ENCODE measurements at regions of chr1 and their contacts with region 1.

Region 1: DNA sequence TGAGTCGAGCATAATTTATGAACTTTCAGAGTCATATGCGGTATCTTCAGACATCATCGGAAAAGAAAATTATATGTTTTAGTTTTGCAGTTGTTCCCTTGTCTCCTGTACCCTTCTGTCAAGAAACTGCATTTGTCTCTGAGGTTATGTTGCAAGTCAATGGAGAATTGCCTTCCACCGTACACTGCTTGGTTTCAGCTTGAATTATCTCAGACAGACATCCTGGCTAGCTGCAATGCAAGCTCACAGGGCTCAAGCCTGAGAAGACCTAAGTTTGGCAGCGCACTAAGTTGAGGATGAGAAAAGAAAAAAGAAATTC is 156.0 kb downstream of the NFIA start:
- DNase-seq: no peak
- H3K4me3 ChIP-seq: no peak overlapping the region
- H3K27ac ChIP-seq: no peak overlapping the region
- H3K4me1 ChIP-seq: peaks cover 23% of the 10 kb centered on the region
- H3K27me3 ChIP-seq: no peaks in the 10 kb centered on the region
- CTCF ChIP-seq: no peak
- POLR2A ChIP-seq: no peak

Region 2: GRCh38 chr1:61604684-61605083 is 366.4 kb after region 1 on chr1:
- intact Hi-C with region 1: loop called (anchors 5 kb)
- DNase-seq: no peak
- H3K4me3 ChIP-seq: no peak overlapping the region
- H3K27ac ChIP-seq: no peak overlapping the region
- H3K4me1 ChIP-seq: peaks cover 22% of the 10 kb centered on the region
- H3K27me3 ChIP-seq: no peaks in the 10 kb centered on the region
- CTCF ChIP-seq: no peak
- POLR2A ChIP-seq: no peak

Region 3: GRCh38 chr1:61904354-61904753 is 666.0 kb after region 1 on chr1:
- intact Hi-C with region 1: no loop called
- DNase-seq: no peak
- H3K4me3 ChIP-seq: no peak overlapping the region
- H3K27ac ChIP-seq: no peak overlapping the region
- H3K4me1 ChIP-seq: no peaks in the 10 kb centered on the region
- H3K27me3 ChIP-seq: no peaks in the 10 kb centered on the region
- CTCF ChIP-seq: no peak
- POLR2A ChIP-seq: no peak

Measured in vagina (tissue), 2 donors.